ENCODE measurements at regions of chr12 and their contacts with region 1.

Region 1: GRCh38 chr12:47307680-47308399 is 228.1 kb upstream of the AMIGO2 start:
- DNase-seq: peak; percentile 50 to 71 (median 61)
- ATAC-seq: peak; percentile 90
- H3K4me3 ChIP-seq: no peak overlapping the region
- H3K27ac ChIP-seq: no peak overlapping the region
- H3K4me1 ChIP-seq: peaks cover 13% of the 10 kb centered on the region
- H3K27me3 ChIP-seq: no peaks in the 10 kb centered on the region
- CTCF ChIP-seq: peak; percentile 46 to 86 (median 81)
- POLR2A ChIP-seq: no peak

Region 2: DNA sequence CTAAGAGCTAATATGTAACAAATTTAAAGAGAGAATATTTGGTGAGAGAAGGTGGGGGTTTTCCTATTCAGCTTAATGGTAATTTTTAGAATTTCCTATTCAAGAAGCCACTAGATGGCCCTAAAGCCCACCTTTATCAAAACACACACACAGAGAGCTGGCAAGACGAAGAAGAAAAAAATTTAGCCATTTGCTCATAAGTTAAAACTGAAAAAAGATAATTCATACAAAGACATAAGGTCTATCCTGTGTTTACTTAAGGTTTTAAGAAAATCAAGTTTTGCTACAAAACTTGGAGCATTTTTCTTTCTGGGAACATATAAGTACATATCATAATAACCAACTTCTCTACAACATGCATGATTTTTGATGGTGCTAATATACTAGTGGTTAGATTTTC is 275.2 kb before region 1 on chr12:
- intact Hi-C with region 1: loop called (anchors 10 kb)
- DNase-seq: peak in 1 of 4 donors; percentile 28
- ATAC-seq: peak; percentile 82
- H3K4me3 ChIP-seq: no peak overlapping the region
- H3K27ac ChIP-seq: no peak overlapping the region
- H3K4me1 ChIP-seq: peaks cover 38% of the 10 kb centered on the region
- H3K27me3 ChIP-seq: no peaks in the 10 kb centered on the region
- CTCF ChIP-seq: peak; percentile 28 to 80 (median 73)
- POLR2A ChIP-seq: no peak

Region 3: DNA sequence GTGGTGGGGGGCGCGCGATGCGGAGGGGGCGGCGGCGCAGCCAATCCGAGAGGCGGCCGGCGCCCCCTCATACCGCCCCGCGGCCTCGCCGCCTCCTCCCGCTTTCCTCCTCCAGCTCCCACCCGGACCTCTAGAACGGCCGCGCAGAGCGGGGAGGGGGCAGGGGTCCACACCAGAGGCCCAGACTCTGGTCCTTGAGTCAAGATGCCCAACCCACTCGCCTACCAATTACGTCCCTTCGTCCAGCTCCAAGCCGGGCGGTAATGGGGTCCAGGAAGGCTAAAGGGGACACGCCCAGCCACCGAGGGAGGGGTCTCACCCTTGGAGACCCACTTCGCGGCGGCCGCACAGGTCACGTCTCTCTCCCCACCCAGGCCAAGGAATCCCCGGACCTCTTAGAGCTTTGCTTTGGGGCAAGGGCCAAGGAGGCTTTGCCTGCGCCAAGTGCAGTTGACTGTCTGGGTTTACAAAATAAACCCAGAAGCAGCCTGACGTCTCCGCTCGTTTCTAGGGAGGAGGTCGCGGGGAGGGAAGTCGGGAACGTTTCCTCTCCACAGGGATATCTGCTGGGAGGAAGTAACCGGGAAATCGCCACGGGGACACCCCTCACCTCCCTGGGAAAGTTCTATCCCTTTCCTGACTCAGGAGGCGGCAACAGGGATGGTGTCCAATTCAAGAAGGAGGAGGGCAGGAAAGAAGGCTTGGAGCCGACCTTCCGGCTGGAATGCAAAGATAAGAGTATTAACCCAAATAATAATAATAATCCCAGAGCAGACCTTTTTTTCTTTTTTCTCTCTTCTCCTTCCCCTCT is 227.7 kb before region 1 on chr12:
- intact Hi-C with region 1: loop called (anchors 10 kb)
- DNase-seq: peak; percentile 39 to 64 (median 42)
- ATAC-seq: peak; percentile 53
- H3K4me3 ChIP-seq: peak overlapping the region; percentile 78 to 88
- H3K27ac ChIP-seq: peak overlapping the region in 3 of 4 donors; percentile 74 to 79 (median 79)
- H3K4me1 ChIP-seq: peaks cover 25% of the 10 kb centered on the region
- H3K27me3 ChIP-seq: no peaks in the 10 kb centered on the region
- CTCF ChIP-seq: no peak
- POLR2A ChIP-seq: peak in 2 of 3 donors; percentile 17 to 44

Region 4: GRCh38 chr12:47251919-47252318 is 55.9 kb before region 1 on chr12:
- intact Hi-C with region 1: no loop called
- DNase-seq: no peak
- ATAC-seq: no peak
- H3K4me3 ChIP-seq: no peak overlapping the region
- H3K27ac ChIP-seq: no peak overlapping the region
- H3K4me1 ChIP-seq: peaks cover 14% of the 10 kb centered on the region
- H3K27me3 ChIP-seq: no peaks in the 10 kb centered on the region
- CTCF ChIP-seq: no peak
- POLR2A ChIP-seq: no peak